Endothelial cell of umbilical vein (primary cell): ENCODE measurements at regions of chr9 and their contacts with region 1.

Region 1: GRCh38 chr9:129569502-129570449 is 51.1 kb downstream of the C9orf50 start:
- DNase-seq: peak; percentile 30
- H3K4me3 ChIP-seq: no peak overlapping the region
- H3K27ac ChIP-seq: no peak overlapping the region
- H3K4me1 ChIP-seq: peaks cover 2% of the 10 kb centered on the region
- H3K27me3 ChIP-seq: no peaks in the 10 kb centered on the region
- CTCF ChIP-seq: peak; percentile 22 to 48
- POLR2A ChIP-seq: no peak

Region 2: GRCh38 chr9:129036241-129036922 is 533.4 kb before region 1 on chr9 and contains the start of gene MIGA2:
- CTCF ChIA-PET with region 1: no interaction called
- POLR2A ChIA-PET with region 1: no interaction called
- dilution Hi-C with region 1: no loop called
- intact Hi-C with region 1: loop called (anchors 5 kb)
- DNase-seq: peak; percentile 99
- H3K4me3 ChIP-seq: peak within 1 kb of the TSS; percentile 68 to 98 (median 73)
- H3K27ac ChIP-seq: no peak within 1 kb of the TSS
- H3K4me1 ChIP-seq: peaks cover 11% of the 10 kb centered on the region
- H3K27me3 ChIP-seq: no peaks in the 10 kb centered on the region
- CTCF ChIP-seq: no peak
- POLR2A ChIP-seq: peak; percentile 93
- total RNA-seq, gene MIGA2: 28.0 and 29.5 TPM in 2 replicates

Region 3: GRCh38 chr9:129487642-129488409 is 82.0 kb before region 1 on chr9:
- CTCF ChIA-PET with region 1: interaction called, 4 read pairs
- POLR2A ChIA-PET with region 1: interaction called, 4 read pairs
- dilution Hi-C with region 1: no loop called
- intact Hi-C with region 1: loop called (anchors 1 kb)
- DNase-seq: peak; percentile 67
- H3K4me3 ChIP-seq: peak overlapping the region in 1 of 3 experiments; percentile 30
- H3K27ac ChIP-seq: peak overlapping the region; percentile 66
- H3K4me1 ChIP-seq: peaks cover 55% of the 10 kb centered on the region
- H3K27me3 ChIP-seq: no peaks in the 10 kb centered on the region
- CTCF ChIP-seq: no peak
- POLR2A ChIP-seq: peak; percentile 58

Region 4: DNA sequence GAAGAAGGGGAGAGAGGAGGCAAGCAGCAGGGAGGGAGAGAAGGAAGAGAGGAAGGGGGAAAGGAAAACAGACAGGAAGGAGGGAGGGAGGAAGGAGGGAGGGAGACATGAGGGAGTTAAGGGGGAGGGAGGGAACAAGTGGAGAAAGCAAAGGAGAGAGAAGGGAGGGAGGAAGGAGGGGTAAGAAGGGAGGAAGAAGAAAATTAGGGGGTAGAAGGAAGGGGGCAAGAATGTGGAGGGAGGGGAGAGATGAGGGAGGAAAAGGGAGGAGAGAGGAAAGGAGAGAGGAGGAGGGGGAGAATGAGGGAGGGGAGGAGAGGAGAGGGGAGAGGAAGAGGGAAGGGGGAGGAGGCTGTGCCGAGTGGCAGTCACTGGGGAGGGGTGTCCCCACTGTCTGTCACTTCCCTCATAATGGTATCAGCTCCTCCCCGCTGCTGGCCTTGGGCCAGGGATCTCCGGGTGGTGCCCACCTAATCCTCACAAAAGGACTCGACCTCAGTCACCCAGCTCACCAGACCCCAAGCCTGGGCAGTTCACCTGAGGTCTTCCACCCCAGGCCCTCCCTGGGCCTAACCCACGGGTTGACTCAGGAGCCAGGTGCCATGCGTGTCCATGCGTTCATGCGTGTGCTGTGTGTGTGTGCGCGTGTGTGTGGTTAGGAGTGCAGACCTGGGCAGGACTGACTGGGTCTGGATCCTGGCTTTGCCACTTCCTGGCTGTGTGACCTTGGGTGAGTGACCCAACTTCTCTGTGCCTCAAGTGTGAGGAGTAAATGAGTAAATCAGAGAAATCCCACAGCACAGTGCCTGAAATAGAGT is 33.0 kb after region 1 on chr9:
- CTCF ChIA-PET with region 1: interaction called, 3 read pairs
- POLR2A ChIA-PET with region 1: no interaction called
- dilution Hi-C with region 1: no loop called
- intact Hi-C with region 1: loop called (anchors 2 kb)
- DNase-seq: no peak
- H3K4me3 ChIP-seq: no peak overlapping the region
- H3K27ac ChIP-seq: no peak overlapping the region
- H3K4me1 ChIP-seq: peaks cover 9% of the 10 kb centered on the region
- H3K27me3 ChIP-seq: no peaks in the 10 kb centered on the region
- CTCF ChIP-seq: no peak
- POLR2A ChIP-seq: no peak

Region 5: GRCh38 chr9:129932303-129933151 is 362.8 kb after region 1 on chr9:
- CTCF ChIA-PET with region 1: no interaction called
- POLR2A ChIA-PET with region 1: no interaction called
- dilution Hi-C with region 1: no loop called
- intact Hi-C with region 1: no loop called
- DNase-seq: peak; percentile 53
- H3K4me3 ChIP-seq: no peak overlapping the region
- H3K27ac ChIP-seq: no peak overlapping the region
- H3K4me1 ChIP-seq: peaks cover 7% of the 10 kb centered on the region
- H3K27me3 ChIP-seq: no peaks in the 10 kb centered on the region
- CTCF ChIP-seq: no peak
- POLR2A ChIP-seq: no peak